HCT116 (cell line): ENCODE measurements at regions of chr11 and their contacts with region 1.

Region 1: GRCh38 chr11:46889689-46890475 is 28.5 kb downstream of the LRP4 start:
- DNase-seq: peak; percentile 47
- ATAC-seq: peak; percentile 87
- H3K4me3 ChIP-seq: no peak overlapping the region
- H3K27ac ChIP-seq: no peak overlapping the region
- H3K4me1 ChIP-seq: no peaks in the 10 kb centered on the region
- H3K27me3 ChIP-seq: no peaks in the 10 kb centered on the region
- CTCF ChIP-seq: peak; percentile 82 to 94 (median 90)
- POLR2A ChIP-seq: no peak
- RAD21 ChIP-seq: peak; percentile 93

Region 2: DNA sequence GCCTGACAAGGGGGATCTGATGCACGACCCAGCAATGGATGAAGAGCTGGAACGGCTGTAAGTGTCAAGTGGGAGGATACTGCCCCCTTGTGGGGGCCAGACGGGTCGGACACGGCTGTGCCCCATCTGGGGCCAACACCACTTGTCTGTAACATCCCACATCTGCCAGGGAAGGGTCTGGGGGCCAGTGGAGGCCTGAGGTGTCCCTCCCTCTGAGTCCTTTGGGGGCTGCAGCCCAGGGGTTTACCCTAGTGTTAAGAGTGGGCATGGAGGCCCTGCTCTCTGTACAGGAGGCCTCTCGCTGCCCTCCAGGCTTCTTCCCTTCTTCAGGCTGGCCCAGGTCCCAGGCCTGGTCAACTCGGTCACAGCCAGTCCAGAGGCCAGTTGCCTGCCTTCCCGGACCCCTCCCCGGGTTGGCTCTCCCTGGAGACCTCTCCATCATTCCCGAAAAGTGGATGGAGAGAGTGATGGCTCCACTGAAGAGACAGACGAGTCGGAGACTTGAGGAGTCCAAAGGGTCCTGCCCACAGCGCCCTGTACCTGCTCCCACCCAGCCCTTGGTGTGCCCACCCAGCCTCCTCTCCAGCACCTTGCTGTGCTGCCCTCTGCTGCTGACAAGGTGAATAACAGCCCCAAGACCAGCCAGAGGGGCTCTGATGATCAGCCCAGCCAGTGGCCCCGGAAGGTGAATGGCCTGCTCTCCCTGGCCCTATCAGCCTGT is 271.4 kb after region 1 on chr11:
- CTCF ChIA-PET with region 1: no interaction called
- POLR2A ChIA-PET with region 1: no interaction called
- RAD21 ChIA-PET with region 1: no interaction called
- intact Hi-C with region 1: loop called (anchors 1 kb)
- DNase-seq: no peak
- ATAC-seq: peak; percentile 89
- H3K4me3 ChIP-seq: no peak overlapping the region
- H3K27ac ChIP-seq: no peak overlapping the region
- H3K4me1 ChIP-seq: no peaks in the 10 kb centered on the region
- H3K27me3 ChIP-seq: no peaks in the 10 kb centered on the region
- CTCF ChIP-seq: peak; percentile 68 to 92 (median 82)
- POLR2A ChIP-seq: no peak
- RAD21 ChIP-seq: peak; percentile 71